ENCODE measurements at regions of chr7 and their contacts with region 1.

Region 1: DNA sequence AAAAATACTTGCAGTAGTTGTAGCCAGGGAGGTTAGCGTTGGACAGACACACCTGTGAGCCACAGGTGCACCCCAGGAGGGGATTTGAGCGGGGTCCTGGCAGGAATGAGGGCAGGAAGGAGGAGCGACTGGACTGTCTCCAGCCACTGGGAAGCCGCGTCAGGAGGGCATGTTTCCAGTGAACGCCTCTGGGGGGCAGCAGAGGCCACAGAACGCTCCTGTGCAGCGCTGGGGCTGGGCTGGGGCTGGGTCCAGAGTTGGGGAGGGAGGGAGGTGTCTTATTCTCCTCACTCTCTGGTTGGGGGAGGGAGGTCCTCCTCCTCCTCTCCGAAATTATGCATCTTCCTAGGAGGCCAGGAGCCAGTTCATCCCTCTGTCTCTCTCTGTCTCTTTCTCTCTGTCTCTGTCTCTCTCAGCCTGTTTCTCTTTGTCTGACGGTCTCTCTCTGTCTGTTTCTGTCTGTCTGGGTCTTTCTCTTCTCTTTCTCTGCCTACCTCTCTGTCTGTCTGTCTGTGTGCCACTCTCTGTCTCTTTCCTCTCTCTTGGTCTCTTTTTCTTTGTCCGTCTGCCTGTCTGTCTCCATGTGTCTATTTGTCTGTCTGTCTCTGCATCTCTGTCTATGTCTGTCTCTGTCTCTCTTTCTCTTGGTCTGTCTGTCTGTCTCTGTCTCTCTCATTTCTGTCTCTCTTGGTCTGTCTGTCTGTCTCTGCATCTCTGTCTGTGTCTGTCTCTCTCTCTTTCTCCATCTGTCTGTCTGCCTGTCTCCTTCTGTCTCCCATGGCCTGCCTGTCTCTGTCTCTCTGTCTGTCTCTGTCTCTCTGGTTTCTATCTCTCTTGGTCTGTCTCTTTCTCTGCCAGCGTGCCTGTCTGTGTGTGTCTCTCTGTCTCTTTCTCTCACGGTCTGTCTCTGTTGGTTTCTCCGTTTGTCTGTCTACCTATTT is 9.9 kb upstream of the PSMG3 start:
- DNase-seq: peak; percentile 63 to 72 (median 70)
- ATAC-seq: peak; percentile 95
- H3K4me3 ChIP-seq: no peak overlapping the region
- H3K27ac ChIP-seq: no peak overlapping the region
- H3K4me1 ChIP-seq: peaks cover 6% of the 10 kb centered on the region
- H3K27me3 ChIP-seq: no peaks in the 10 kb centered on the region
- CTCF ChIP-seq: peak; percentile 61 to 80 (median 75)
- POLR2A ChIP-seq: no peak

Region 2: DNA sequence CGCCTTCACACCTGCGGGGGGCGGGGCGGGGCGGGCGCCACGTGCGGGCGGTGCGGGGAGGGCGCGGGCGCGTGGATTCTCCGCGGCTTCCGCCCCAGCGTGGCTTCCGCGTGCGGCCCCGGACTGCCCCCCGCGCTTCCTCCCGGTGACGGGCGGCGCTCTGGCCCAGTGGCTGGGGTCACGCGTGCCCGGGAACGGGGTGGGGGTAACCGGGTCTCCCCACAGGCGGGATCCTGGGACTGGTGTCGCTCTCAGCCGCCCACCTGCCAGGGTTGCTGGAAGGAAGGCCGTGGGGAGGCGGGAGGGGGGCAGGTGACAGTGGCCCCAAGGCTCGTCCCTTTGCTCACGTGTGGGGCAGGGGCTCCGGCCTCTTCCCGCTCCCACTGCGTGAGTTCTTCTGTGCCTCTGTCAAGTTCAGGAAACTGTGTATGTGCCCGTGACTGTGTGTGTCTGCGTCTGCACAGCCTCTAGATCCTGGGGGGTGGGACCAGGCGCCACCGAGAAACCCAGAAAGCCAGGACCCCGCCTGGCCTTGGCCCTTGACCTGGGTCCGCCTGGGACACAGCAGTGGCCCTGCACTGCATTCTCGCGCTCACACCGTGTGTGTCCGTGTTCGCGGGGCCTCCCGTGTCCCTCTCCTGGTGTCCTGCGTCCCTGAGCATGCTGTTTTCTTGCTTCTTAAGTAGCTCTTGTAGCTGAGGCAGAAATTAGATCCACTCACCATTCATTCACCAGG is 48.3 kb before region 1 on chr7:
- intact Hi-C with region 1: no loop called
- DNase-seq: peak; percentile 59 to 66 (median 62)
- ATAC-seq: peak; percentile 16
- H3K4me3 ChIP-seq: peak overlapping the region in 1 of 2 donors; percentile 55
- H3K27ac ChIP-seq: peak overlapping the region; percentile 97 to 100 (median 98)
- H3K4me1 ChIP-seq: peaks cover 50% of the 10 kb centered on the region
- H3K27me3 ChIP-seq: no peaks in the 10 kb centered on the region
- CTCF ChIP-seq: no peak
- POLR2A ChIP-seq: peak; percentile 31 to 69 (median 63)

Region 3: GRCh38 chr7:2354186-2354938 is 774.6 kb after region 1 on chr7 and contains the start of gene EIF3B:
- intact Hi-C with region 1: loop called (anchors 5 kb)
- DNase-seq: peak; percentile 88 to 92 (median 91)
- ATAC-seq: peak; percentile 91
- H3K4me3 ChIP-seq: peak within 1 kb of the TSS; percentile 82 to 99
- H3K27ac ChIP-seq: peak within 1 kb of the TSS; percentile 93 to 99 (median 97)
- H3K4me1 ChIP-seq: peaks cover 43% of the 10 kb centered on the region
- H3K27me3 ChIP-seq: no peaks in the 10 kb centered on the region
- CTCF ChIP-seq: no peak
- POLR2A ChIP-seq: peak; percentile 8 to 46 (median 26)
- total RNA-seq, gene EIF3B: 87.2 to 232 TPM

Measured in body of pancreas (tissue), 4 donors.